Activated B cell treated with CpG ODN at 0.5 μM for 24 hours (primary cell): ENCODE measurements at regions of chr10 and their contacts with region 1.

Region 1: DNA sequence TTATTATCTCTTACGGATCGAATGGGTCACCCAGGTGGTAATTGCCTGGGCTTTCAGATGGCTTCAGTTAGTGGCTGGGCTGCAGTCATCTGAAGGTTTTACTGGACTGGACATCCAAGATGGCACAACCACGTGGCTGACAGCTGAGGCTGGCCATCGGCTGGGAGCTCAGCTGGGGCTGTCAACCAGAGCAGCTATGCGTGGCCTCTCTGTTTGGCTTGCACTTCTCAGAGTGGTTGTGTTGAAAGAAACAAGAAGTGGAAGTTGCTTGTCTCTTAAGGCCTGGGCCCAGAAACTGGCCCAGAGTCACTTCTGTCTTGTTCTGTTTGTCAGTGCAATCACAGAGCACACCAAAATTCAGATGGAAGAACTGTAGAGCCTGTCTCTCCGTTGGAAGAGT is 5.7 kb upstream of the GDI2 start:
- DNase-seq: no peak
- ATAC-seq: peak; percentile 51
- H3K4me3 Mint-ChIP-seq: peak overlapping the region; percentile 75
- H3K27ac Mint-ChIP-seq: peak overlapping the region; percentile 94
- H3K4me1 Mint-ChIP-seq: peaks cover 74% of the 10 kb centered on the region
- H3K27me3 Mint-ChIP-seq: no peaks in the 10 kb centered on the region
- CTCF ChIP-seq: no peak

Region 2: DNA sequence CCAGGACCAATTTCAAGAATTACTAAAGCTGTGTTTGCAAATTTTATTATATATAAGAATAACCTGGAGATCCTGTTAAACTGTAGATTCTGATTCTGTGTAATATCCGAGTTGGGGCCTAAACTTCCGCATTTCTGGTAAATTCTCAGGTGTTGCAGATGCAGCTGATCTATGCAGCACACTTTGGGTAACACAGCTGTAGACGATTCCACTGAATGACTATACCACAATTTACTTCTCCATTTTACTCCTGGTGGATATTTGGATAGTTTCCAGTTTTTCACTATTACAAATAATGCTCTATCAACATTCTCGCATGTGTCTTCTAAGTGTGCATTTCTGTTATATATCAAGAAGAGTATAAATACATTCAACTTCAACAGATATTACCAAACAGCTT is 13.2 kb before region 1 on chr10:
- CTCF ChIA-PET with region 1: interaction called, 3 read pairs
- POLR2A ChIA-PET with region 1: interaction called, 15 read pairs
- intact Hi-C with region 1: no loop called
- DNase-seq: no peak
- ATAC-seq: peak; percentile 51
- H3K4me3 Mint-ChIP-seq: no peak overlapping the region
- H3K27ac Mint-ChIP-seq: peak overlapping the region; percentile 37
- H3K4me1 Mint-ChIP-seq: peaks cover 73% of the 10 kb centered on the region
- H3K27me3 Mint-ChIP-seq: no peaks in the 10 kb centered on the region
- CTCF ChIP-seq: no peak

Region 3: DNA sequence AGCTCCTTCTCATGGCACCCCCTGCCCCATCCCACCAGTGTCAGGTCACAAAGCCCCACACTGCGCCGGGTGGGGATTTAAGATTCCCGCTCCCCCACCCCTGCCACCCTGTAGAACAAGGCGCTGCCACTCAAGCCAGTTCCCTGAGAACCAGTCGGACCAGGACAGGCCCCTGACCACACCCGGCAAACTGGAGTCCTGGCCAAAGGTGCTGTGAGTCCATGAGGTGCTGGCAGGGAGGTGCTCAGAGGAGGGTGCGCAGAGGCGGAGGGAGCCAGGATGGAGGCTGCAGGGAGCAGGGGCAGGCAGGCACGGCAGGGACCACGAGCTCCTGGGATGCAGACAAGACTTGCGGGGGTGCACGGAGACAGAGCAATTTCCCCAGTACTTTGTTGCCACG is 14.0 kb after region 1 on chr10:
- CTCF ChIA-PET with region 1: interaction called, 3 read pairs
- POLR2A ChIA-PET with region 1: interaction called, 35 read pairs
- intact Hi-C with region 1: loop called (anchors 1 kb)
- DNase-seq: no peak
- ATAC-seq: no peak
- H3K4me3 Mint-ChIP-seq: no peak overlapping the region
- H3K27ac Mint-ChIP-seq: no peak overlapping the region
- H3K4me1 Mint-ChIP-seq: peaks cover 21% of the 10 kb centered on the region
- H3K27me3 Mint-ChIP-seq: no peaks in the 10 kb centered on the region
- CTCF ChIP-seq: no peak

Region 4: GRCh38 chr10:5840314-5841307 is 21.7 kb after region 1 on chr10:
- CTCF ChIA-PET with region 1: interaction called, 10 read pairs
- POLR2A ChIA-PET with region 1: interaction called, 373 read pairs
- intact Hi-C with region 1: loop called (anchors 1 kb)
- DNase-seq: peak; percentile 78
- ATAC-seq: peak; percentile 83
- H3K4me3 Mint-ChIP-seq: peak overlapping the region; percentile 84
- H3K27ac Mint-ChIP-seq: peak overlapping the region; percentile 98
- H3K4me1 Mint-ChIP-seq: peaks cover 79% of the 10 kb centered on the region
- H3K27me3 Mint-ChIP-seq: no peaks in the 10 kb centered on the region
- CTCF ChIP-seq: no peak

Region 5: DNA sequence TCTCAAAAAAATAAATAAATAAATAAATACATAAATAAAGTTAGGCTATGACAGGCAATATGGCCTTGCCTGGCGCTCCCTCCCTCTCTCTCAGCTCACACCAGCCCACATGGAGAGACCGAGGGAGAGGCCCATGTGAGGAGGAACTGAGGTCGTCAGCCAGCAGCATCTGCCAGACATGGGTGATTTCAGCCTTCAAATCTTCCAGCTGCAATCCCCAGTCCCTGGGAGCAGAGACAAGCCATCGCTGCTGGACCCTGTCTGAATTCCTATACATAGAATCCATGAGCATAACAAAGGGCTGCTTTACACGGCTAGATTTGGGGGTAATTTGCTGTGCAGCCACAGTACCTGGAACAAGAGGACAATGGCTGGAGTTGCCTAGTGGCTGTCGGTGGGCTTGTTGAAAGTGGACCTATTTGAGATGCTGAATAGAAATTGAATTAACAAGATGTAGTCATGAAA is 35.2 kb after region 1 on chr10:
- CTCF ChIA-PET with region 1: interaction called, 5 read pairs
- POLR2A ChIA-PET with region 1: interaction called, 76 read pairs
- intact Hi-C with region 1: loop called (anchors 1 kb)
- DNase-seq: no peak
- ATAC-seq: no peak
- H3K4me3 Mint-ChIP-seq: no peak overlapping the region
- H3K27ac Mint-ChIP-seq: peak overlapping the region; percentile 15
- H3K4me1 Mint-ChIP-seq: peaks cover 47% of the 10 kb centered on the region
- H3K27me3 Mint-ChIP-seq: no peaks in the 10 kb centered on the region
- CTCF ChIP-seq: no peak

Region 6: GRCh38 chr10:5862360-5862961 is 43.6 kb after region 1 on chr10:
- CTCF ChIA-PET with region 1: interaction called, 8 read pairs
- POLR2A ChIA-PET with region 1: interaction called, 46 read pairs
- intact Hi-C with region 1: no loop called
- DNase-seq: no peak
- ATAC-seq: peak; percentile 71
- H3K4me3 Mint-ChIP-seq: peak overlapping the region; percentile 61
- H3K27ac Mint-ChIP-seq: peak overlapping the region; percentile 87
- H3K4me1 Mint-ChIP-seq: peaks cover 41% of the 10 kb centered on the region
- H3K27me3 Mint-ChIP-seq: no peaks in the 10 kb centered on the region
- CTCF ChIP-seq: no peak

Region 7: GRCh38 chr10:5889624-5890451 is 70.9 kb after region 1 on chr10 and contains the starts of genes ANKRD16 and FBH1:
- CTCF ChIA-PET with region 1: interaction called, 3 read pairs
- POLR2A ChIA-PET with region 1: interaction called, 173 read pairs
- intact Hi-C with region 1: no loop called
- DNase-seq: peak; percentile 100
- ATAC-seq: peak; percentile 85
- H3K4me3 Mint-ChIP-seq: peak within 1 kb of the TSS; percentile 87
- H3K27ac Mint-ChIP-seq: peak within 1 kb of the TSS; percentile 78
- H3K4me1 Mint-ChIP-seq: peaks cover 59% of the 10 kb centered on the region
- H3K27me3 Mint-ChIP-seq: no peaks in the 10 kb centered on the region
- CTCF ChIP-seq: no peak
- total RNA-seq, gene ANKRD16: 9.2 and 11.1 TPM in 2 replicates
- total RNA-seq, gene FBH1: 65.5 and 68.7 TPM in 2 replicates